Tibial artery (tissue), 4 donors: ENCODE measurements at regions of chr2 and their contacts with region 1.

Region 1: DNA sequence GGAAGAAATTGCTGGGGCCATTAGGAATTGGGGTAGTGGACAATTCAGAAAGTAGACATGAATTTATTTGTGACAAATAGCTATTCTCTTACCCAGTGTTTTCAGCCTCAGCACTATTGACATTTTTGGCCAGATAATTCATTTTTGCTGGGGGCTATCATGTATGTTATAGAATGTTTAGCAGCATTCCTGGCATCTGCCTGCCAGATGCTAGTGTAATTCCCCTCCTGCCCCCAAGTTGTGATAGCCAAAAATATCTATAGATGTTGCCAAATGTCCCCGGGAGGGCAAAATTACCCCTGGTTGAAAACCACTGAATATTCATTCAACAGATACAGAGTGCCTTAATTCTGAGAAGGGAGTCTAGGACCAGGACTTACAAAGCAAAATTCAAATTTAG is 183.6 kb downstream of the BABAM2 start:
- DNase-seq: no peak
- H3K4me3 ChIP-seq: no peak overlapping the region
- H3K27ac ChIP-seq: no peak overlapping the region
- H3K4me1 ChIP-seq: no peaks in the 10 kb centered on the region
- H3K27me3 ChIP-seq: no peaks in the 10 kb centered on the region
- CTCF ChIP-seq: no peak

Region 2: GRCh38 chr2:28117104-28117596 is 43.0 kb after region 1 on chr2:
- intact Hi-C with region 1: loop called (anchors 2 kb)
- DNase-seq: no peak
- H3K4me3 ChIP-seq: no peak overlapping the region
- H3K27ac ChIP-seq: no peak overlapping the region
- H3K4me1 ChIP-seq: no peaks in the 10 kb centered on the region
- H3K27me3 ChIP-seq: no peaks in the 10 kb centered on the region
- CTCF ChIP-seq: no peak

Region 3: DNA sequence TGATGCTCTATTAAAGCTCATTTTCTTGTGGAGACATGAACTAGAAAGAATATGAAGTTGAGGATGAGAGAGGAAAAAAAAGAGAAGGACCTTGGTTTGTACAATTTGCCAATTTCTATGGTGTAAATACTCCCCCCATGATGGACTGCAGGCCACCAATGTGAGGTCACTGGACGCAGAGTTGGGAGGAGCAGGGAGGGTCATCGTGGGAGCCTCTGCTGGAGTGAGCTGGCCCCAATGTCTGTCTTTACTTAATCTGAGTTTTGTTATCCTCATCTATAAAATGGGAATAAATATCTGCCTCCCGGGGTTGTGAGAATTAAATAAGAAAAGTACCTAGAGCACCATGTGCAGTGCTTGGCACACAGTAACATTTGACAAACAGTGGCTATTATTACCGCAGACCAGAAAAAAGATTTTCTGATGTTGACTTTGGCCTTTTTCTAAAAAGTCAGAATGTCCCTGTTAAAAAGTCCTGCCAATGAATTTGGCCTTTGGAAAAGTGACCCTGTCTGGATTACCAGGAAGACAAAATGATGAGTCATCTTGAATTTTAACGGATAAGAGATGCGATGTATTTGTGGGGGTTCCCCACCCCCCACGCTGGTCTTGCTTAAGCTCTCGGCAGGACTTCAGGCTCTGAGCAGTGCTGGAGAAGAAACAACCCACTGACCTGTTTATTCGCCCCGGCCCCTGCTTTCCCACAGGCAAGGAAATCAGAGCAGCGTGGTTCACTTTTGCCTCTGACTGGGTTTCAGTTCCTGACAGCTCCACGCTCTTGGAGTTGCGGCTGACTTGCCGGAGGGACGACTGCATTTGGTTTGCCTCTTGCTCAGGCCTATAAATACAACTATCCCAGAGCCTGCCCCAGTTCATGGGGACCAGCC is 268.2 kb after region 1 on chr2:
- intact Hi-C with region 1: no loop called
- DNase-seq: peak; percentile 89 to 94
- H3K4me3 ChIP-seq: peak overlapping the region; percentile 25 to 30
- H3K27ac ChIP-seq: peak overlapping the region; percentile 83 to 84
- H3K4me1 ChIP-seq: peaks cover 0 to 71% (median 62%) of the 10 kb centered on the region in 4 donors
- H3K27me3 ChIP-seq: no peaks in the 10 kb centered on the region
- CTCF ChIP-seq: no peak